ENCODE measurements at regions of chr6 and their contacts with region 1.

Region 1: DNA sequence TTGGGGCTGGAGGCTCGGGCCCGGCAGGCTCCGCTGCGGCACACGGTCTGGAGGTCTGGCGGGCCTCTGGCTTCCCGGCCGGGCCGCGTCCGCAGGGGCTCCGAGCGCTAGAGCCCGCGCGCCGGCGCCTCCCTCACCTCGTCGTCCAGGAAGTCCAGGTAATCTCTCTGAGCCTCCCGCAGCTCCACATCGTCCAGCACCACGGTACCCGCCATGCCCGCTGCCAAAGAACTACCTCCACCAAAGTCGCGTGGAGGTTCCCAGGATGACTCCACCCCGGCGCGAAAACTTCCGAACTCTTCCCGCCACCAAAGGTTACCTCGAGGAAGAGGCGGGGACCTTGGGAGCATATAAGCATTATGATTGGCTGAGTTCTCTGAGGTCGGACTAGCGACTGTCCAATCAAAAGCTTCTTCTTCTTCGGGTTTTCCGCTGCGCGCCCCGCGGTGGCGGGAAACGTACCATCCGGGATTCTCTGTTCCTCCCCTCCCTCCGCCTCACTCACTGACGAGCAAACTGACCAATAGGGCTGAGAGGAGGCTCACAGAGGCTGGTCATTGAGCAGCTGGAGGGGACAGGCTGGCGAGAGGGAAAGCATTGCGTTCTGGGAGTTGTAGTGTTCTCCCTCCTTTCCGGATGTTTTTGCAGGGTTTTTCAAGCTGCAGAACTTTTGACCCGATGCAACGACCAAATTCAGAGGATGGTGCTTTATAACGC is at the start of gene MCM3:
- DNase-seq: peak; percentile 99
- H3K4me3 Mint-ChIP-seq: no peak within 1 kb of the TSS
- H3K27ac Mint-ChIP-seq: peak within 1 kb of the TSS; percentile 61
- H3K4me1 Mint-ChIP-seq: peaks cover 50% of the 10 kb centered on the region
- H3K27me3 Mint-ChIP-seq: no peaks in the 10 kb centered on the region
- total RNA-seq, gene MCM3: 231 to 244 TPM

Region 2: GRCh38 chr6:52227495-52227894 is 57.1 kb before region 1 on chr6:
- CTCF ChIA-PET with region 1: interaction called, 3 read pairs
- POLR2A ChIA-PET with region 1: interaction called, 7 read pairs
- intact Hi-C with region 1: loop called (anchors 1 kb)
- DNase-seq: peak; percentile 90
- H3K4me3 Mint-ChIP-seq: no peak overlapping the region
- H3K27ac Mint-ChIP-seq: no peak overlapping the region
- H3K4me1 Mint-ChIP-seq: peaks cover 20% of the 10 kb centered on the region
- H3K27me3 Mint-ChIP-seq: peaks cover 39% of the 10 kb centered on the region

Region 3: DNA sequence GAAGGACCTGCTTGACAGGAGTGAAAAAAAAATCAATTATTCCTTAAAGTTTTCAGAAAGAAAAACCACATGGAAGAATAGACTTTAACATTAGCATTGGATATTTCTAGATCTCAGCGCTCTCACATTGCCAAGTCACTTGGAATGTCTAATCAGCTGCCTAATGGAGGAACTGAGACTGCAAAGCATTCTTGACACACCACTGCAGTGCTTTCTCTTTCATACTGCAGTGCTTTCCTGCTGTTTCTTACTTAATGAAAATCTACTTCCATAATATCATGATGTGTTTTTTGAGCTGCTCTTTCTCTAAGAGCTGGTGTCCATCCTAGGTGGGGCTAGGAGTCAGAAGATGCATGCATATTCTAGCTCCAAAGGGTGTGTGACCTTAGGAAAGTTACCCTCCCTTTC is 20.4 kb after region 1 on chr6:
- CTCF ChIA-PET with region 1: interaction called, 19 read pairs
- POLR2A ChIA-PET with region 1: interaction called, 8 read pairs
- intact Hi-C with region 1: loop called (anchors 1 kb)
- DNase-seq: no peak
- H3K4me3 Mint-ChIP-seq: peak overlapping the region; percentile 28
- H3K27ac Mint-ChIP-seq: peak overlapping the region; percentile 74
- H3K4me1 Mint-ChIP-seq: peaks cover 71% of the 10 kb centered on the region
- H3K27me3 Mint-ChIP-seq: no peaks in the 10 kb centered on the region

Region 4: GRCh38 chr6:52389626-52390360 is 105.2 kb after region 1 on chr6:
- CTCF ChIA-PET with region 1: interaction called, 40 read pairs
- POLR2A ChIA-PET with region 1: interaction called, 22 read pairs
- intact Hi-C with region 1: loop called (anchors 1 kb)
- DNase-seq: peak; percentile 74
- H3K4me3 Mint-ChIP-seq: peak overlapping the region; percentile 47
- H3K27ac Mint-ChIP-seq: peak overlapping the region; percentile 76
- H3K4me1 Mint-ChIP-seq: peaks cover 82% of the 10 kb centered on the region
- H3K27me3 Mint-ChIP-seq: no peaks in the 10 kb centered on the region

Region 5: GRCh38 chr6:52577022-52577777 is 292.6 kb after region 1 on chr6 and contains the start of gene TRAM2:
- CTCF ChIA-PET with region 1: interaction called, 5 read pairs
- POLR2A ChIA-PET with region 1: no interaction called
- intact Hi-C with region 1: loop called (anchors 2 kb)
- DNase-seq: peak; percentile 70
- H3K4me3 Mint-ChIP-seq: peak within 1 kb of the TSS; percentile 77
- H3K27ac Mint-ChIP-seq: peak within 1 kb of the TSS; percentile 59
- H3K4me1 Mint-ChIP-seq: peaks cover 29% of the 10 kb centered on the region
- H3K27me3 Mint-ChIP-seq: no peaks in the 10 kb centered on the region
- total RNA-seq, gene TRAM2: 2.4 to 2.6 TPM

Region 6: GRCh38 chr6:52995913-52996645 is 711.5 kb after region 1 on chr6:
- CTCF ChIA-PET with region 1: no interaction called
- POLR2A ChIA-PET with region 1: no interaction called
- intact Hi-C with region 1: loop called (anchors 5 kb)
- DNase-seq: peak; percentile 49
- H3K4me3 Mint-ChIP-seq: peak overlapping the region; percentile 95
- H3K27ac Mint-ChIP-seq: peak overlapping the region; percentile 99
- H3K4me1 Mint-ChIP-seq: peaks cover 31% of the 10 kb centered on the region
- H3K27me3 Mint-ChIP-seq: peaks cover 5% of the 10 kb centered on the region

Measured in activated CD4-positive, alpha-beta memory T cell treated with anti-CD3 and anti-CD28 coated beads for 36 hours (primary cell).